Caco-2 (cell line): ENCODE measurements at regions of chr19 and their contacts with region 1.

Region 1: GRCh38 chr19:54231077-54231931 is 8.5 kb upstream of the LILRB3 start:
- DNase-seq: peak; percentile 86 to 91
- H3K4me3 ChIP-seq: no peak overlapping the region
- H3K4me3 Mint-ChIP-seq: no peak overlapping the region
- H3K27ac Mint-ChIP-seq: no peak overlapping the region
- H3K4me1 ChIP-seq: peaks cover 9% of the 10 kb centered on the region
- H3K4me1 Mint-ChIP-seq: peaks cover 24% of the 10 kb centered on the region
- H3K27me3 ChIP-seq: no peaks in the 10 kb centered on the region
- H3K27me3 Mint-ChIP-seq: peaks cover 3% of the 10 kb centered on the region
- CTCF ChIP-seq: peak; percentile 87 to 90

Region 2: GRCh38 chr19:54209811-54210494 is 21.4 kb before region 1 on chr19:
- CTCF ChIA-PET with region 1: no interaction called
- POLR2A ChIA-PET with region 1: no interaction called
- intact Hi-C with region 1: loop called (anchors 2 kb)
- DNase-seq: peak; percentile 70 to 79
- H3K4me3 ChIP-seq: no peak overlapping the region
- H3K4me3 Mint-ChIP-seq: peak overlapping the region; percentile 45
- H3K27ac Mint-ChIP-seq: peak overlapping the region; percentile 78
- H3K4me1 ChIP-seq: peaks cover 65% of the 10 kb centered on the region
- H3K4me1 Mint-ChIP-seq: peaks cover 41% of the 10 kb centered on the region
- H3K27me3 ChIP-seq: no peaks in the 10 kb centered on the region
- H3K27me3 Mint-ChIP-seq: no peaks in the 10 kb centered on the region
- CTCF ChIP-seq: no peak

Region 3: DNA sequence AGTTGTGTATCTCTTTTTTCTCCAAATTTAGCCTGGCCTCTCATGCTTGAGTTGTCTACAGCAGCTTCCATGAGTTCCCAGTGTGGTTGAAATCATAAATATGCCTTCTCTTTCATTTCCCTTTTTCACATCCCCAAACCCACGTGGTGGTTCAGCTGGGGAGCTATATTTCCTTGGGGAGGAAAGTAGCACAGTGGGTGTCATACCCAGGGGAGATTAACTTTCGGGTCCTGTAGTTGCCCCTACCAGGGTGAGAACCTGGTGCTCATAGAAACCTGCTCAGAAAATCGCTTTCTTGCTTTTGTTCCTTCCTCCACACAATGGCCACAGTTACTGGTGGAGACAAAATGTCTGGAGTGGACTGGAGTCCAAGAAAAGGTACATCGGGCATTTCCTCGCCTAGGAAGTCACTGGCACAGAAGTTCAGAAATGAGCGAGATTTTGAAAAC is 114.7 kb after region 1 on chr19:
- CTCF ChIA-PET with region 1: no interaction called
- POLR2A ChIA-PET with region 1: no interaction called
- intact Hi-C with region 1: no loop called
- DNase-seq: no peak
- H3K4me3 ChIP-seq: no peak overlapping the region
- H3K4me3 Mint-ChIP-seq: no peak overlapping the region
- H3K27ac Mint-ChIP-seq: no peak overlapping the region
- H3K4me1 ChIP-seq: no peaks in the 10 kb centered on the region
- H3K4me1 Mint-ChIP-seq: no peaks in the 10 kb centered on the region
- H3K27me3 ChIP-seq: no peaks in the 10 kb centered on the region
- H3K27me3 Mint-ChIP-seq: peaks cover 29% of the 10 kb centered on the region
- CTCF ChIP-seq: no peak